ENCODE measurements at regions of chr9 and their contacts with region 1.

Region 1: GRCh38 chr9:37592108-37592951 is at the start of gene TOMM5:
- DNase-seq: peak; percentile 96
- ATAC-seq: peak; percentile 95
- H3K4me3 Mint-ChIP-seq: peak within 1 kb of the TSS; percentile 100
- H3K27ac Mint-ChIP-seq: peak within 1 kb of the TSS; percentile 98
- H3K4me1 Mint-ChIP-seq: peaks cover 32% of the 10 kb centered on the region
- H3K27me3 Mint-ChIP-seq: peaks cover 9% of the 10 kb centered on the region
- total RNA-seq, gene TOMM5: 118 to 153 TPM

Region 2: GRCh38 chr9:36572515-36573418 is 1019.6 kb before region 1 on chr9 and contains the start of gene MELK:
- CTCF ChIA-PET with region 1: no interaction called
- POLR2A ChIA-PET with region 1: no interaction called
- intact Hi-C with region 1: loop called in 1 of 2 experiments (anchors 5 kb)
- DNase-seq: peak; percentile 89
- ATAC-seq: peak; percentile 73
- H3K4me3 Mint-ChIP-seq: peak within 1 kb of the TSS; percentile 97
- H3K27ac Mint-ChIP-seq: peak within 1 kb of the TSS; percentile 85
- H3K4me1 Mint-ChIP-seq: peaks cover 27% of the 10 kb centered on the region
- H3K27me3 Mint-ChIP-seq: no peaks in the 10 kb centered on the region
- total RNA-seq, gene MELK: 63.9 to 66.1 TPM

Region 3: GRCh38 chr9:37119907-37120842 is 472.2 kb before region 1 on chr9 and contains the start of gene ZCCHC7:
- CTCF ChIA-PET with region 1: no interaction called
- POLR2A ChIA-PET with region 1: no interaction called
- intact Hi-C with region 1: loop called in 1 of 2 experiments (anchors 1 kb)
- DNase-seq: peak; percentile 98
- ATAC-seq: peak; percentile 98
- H3K4me3 Mint-ChIP-seq: peak within 1 kb of the TSS; percentile 80
- H3K27ac Mint-ChIP-seq: peak within 1 kb of the TSS; percentile 96
- H3K4me1 Mint-ChIP-seq: peaks cover 31% of the 10 kb centered on the region
- H3K27me3 Mint-ChIP-seq: no peaks in the 10 kb centered on the region
- total RNA-seq, gene ZCCHC7: 29.9 to 50.2 TPM

Region 4: DNA sequence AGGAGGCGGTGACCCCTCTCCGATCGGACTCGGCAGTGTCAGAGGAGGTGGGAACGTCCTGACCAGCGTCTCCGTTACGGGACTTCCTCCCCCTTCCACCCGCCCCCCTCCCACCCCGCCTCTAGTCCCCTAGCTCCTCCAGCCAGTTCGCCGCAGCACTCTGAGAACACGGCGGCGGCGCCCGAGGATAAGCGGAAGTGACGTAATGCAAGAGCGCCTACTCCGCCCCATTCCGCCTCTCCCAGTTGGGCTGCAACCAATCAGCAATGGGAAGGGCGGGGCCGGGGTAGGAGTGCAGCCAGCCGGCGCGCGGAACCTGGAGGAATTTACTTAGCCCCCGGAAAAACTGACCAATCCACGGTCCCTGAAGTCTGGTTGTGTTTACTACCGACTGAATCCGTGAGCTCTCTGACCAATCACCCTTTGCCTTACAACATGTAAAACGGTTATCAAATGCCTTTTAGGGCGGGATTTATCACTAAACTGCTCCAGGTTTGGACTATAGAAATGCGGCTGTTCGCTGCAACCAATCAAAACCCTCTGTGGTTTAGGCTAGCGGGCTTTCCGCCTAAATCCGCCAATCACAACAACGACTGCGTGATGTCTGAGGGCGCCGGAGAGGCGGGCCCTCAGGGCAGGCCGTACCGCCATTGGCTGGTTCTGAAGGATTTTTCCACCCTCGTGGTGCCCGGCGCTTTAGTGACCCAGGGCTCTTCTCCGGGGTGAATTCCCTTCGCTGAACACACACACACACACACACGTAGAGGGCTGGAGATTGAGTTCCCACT is 126.9 kb before region 1 on chr9 and contains the start of gene ZBTB5:
- CTCF ChIA-PET with region 1: no interaction called
- POLR2A ChIA-PET with region 1: no interaction called
- intact Hi-C with region 1: loop called (anchors 1 kb)
- DNase-seq: peak; percentile 99
- ATAC-seq: peak; percentile 85
- H3K4me3 Mint-ChIP-seq: peak within 1 kb of the TSS; percentile 97
- H3K27ac Mint-ChIP-seq: peak within 1 kb of the TSS; percentile 96
- H3K4me1 Mint-ChIP-seq: peaks cover 30% of the 10 kb centered on the region
- H3K27me3 Mint-ChIP-seq: no peaks in the 10 kb centered on the region
- total RNA-seq, gene ZBTB5: 8.0 to 9.1 TPM

Region 5: GRCh38 chr9:37575921-37576721 is 16.2 kb before region 1 on chr9 and contains the start of gene FBXO10:
- CTCF ChIA-PET with region 1: interaction called, 26 read pairs
- POLR2A ChIA-PET with region 1: interaction called, 6 read pairs
- intact Hi-C with region 1: no loop called
- DNase-seq: peak; percentile 68
- ATAC-seq: peak; percentile 69
- H3K4me3 Mint-ChIP-seq: peak within 1 kb of the TSS; percentile 75
- H3K27ac Mint-ChIP-seq: peak within 1 kb of the TSS; percentile 63
- H3K4me1 Mint-ChIP-seq: peaks cover 17% of the 10 kb centered on the region
- H3K27me3 Mint-ChIP-seq: no peaks in the 10 kb centered on the region
- total RNA-seq, gene FBXO10: 2.6 TPM

Region 6: DNA sequence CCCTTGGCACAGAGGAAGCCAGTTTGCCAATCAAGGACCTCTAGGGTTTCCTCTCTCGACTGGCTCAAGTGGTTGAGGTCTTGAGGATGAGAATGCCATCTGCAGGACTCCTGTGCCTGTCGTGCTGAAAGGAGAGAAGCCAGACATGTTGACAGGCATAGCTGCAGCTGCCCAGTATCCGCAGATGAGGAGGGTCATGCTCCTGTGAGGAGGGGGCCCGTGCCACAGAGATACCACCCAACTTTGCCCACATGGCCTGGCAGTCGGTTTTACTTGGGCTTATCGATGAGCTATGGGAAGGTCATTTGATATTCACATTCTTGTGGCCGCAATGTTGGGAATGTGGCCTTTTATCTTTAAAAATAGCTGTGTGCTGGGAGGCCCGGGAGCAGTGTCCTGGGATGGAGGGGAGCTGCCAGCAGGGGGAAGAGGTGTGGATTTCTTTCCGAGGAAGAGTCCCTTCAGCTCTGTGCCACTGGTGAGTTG is 75.8 kb after region 1 on chr9:
- CTCF ChIA-PET with region 1: no interaction called
- POLR2A ChIA-PET with region 1: no interaction called
- intact Hi-C with region 1: no loop called
- DNase-seq: no peak
- ATAC-seq: no peak
- H3K4me3 Mint-ChIP-seq: no peak overlapping the region
- H3K27ac Mint-ChIP-seq: no peak overlapping the region
- H3K4me1 Mint-ChIP-seq: no peaks in the 10 kb centered on the region
- H3K27me3 Mint-ChIP-seq: peaks cover 26% of the 10 kb centered on the region

Region 7: GRCh38 chr9:37784616-37785483 is 192.5 kb after region 1 on chr9 and contains the start of gene EXOSC3:
- CTCF ChIA-PET with region 1: no interaction called
- POLR2A ChIA-PET with region 1: interaction called, 7 read pairs
- intact Hi-C with region 1: loop called in 1 of 2 experiments (anchors 5 kb)
- DNase-seq: peak; percentile 93
- ATAC-seq: peak; percentile 90
- H3K4me3 Mint-ChIP-seq: peak within 1 kb of the TSS; percentile 98
- H3K27ac Mint-ChIP-seq: peak within 1 kb of the TSS; percentile 96
- H3K4me1 Mint-ChIP-seq: peaks cover 30% of the 10 kb centered on the region
- H3K27me3 Mint-ChIP-seq: no peaks in the 10 kb centered on the region
- total RNA-seq, gene EXOSC3: 86.9 to 117 TPM

Region 8: GRCh38 chr9:38068866-38069629 is 476.7 kb after region 1 on chr9 and contains the start of gene SHB:
- CTCF ChIA-PET with region 1: no interaction called
- POLR2A ChIA-PET with region 1: no interaction called
- intact Hi-C with region 1: loop called in 1 of 2 experiments (anchors 5 kb)
- DNase-seq: peak; percentile 86
- ATAC-seq: peak; percentile 80
- H3K4me3 Mint-ChIP-seq: peak within 1 kb of the TSS; percentile 56
- H3K27ac Mint-ChIP-seq: no peak within 1 kb of the TSS
- H3K4me1 Mint-ChIP-seq: peaks cover 15% of the 10 kb centered on the region
- H3K27me3 Mint-ChIP-seq: peaks cover 7% of the 10 kb centered on the region
- total RNA-seq, gene SHB: 1.2 to 1.3 TPM

Measured in activated CD4-positive, alpha-beta T cell treated with anti-CD3 and anti-CD28 coated beads for 36 hours (primary cell).